ENCODE measurements at regions of chr16 and their contacts with region 1.

Region 1: DNA sequence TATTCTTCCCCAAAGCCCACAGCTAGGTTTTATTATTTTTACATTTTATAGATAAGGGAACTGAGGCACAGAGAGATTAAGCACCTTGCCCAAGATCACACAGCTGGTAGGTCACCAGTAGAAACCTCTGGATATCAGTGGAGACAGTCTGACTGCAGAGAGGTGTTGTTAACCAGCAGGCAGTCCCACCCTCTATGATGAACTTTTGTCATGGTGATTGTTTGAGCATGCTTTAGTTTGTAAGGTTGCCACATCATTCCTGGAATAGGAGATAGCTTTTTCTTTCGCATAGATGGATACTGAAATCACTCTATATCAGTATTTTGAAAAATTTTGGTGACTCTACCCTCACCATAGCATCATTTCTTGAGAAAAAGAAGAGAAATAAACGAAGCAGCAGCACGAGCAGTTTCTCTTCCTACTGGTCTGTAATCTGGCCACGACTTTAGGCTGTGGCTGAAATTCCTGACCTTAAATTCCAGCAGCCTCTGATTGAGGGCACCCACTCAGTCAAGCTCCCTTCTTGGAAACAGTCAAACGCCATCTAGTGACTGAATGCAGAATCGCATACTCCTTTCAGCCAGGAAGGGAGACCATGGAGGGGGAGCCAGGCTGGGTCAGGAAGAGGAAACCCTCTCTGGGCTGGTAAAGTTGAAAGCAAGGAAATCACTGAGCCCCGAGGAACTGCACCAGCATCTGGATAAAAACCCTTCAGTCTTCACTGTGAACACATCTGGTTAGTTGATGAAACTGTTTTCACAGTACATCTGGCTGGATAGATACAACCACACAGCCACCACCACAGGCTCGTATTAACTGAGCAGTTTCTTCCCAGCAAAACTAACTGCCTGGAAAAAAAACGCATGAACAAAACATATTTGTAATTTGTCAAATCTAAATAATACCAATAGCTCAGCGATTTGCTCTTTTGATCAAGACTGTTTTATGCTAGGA is 108.4 kb upstream of the XYLT1 start:
- DNase-seq: peak; percentile 51
- CTCF ChIP-seq: peak; percentile 91

Region 2: GRCh38 chr16:17377360-17378324 is 201.6 kb before region 1 on chr16:
- CTCF ChIA-PET with region 1: no interaction called
- POLR2A ChIA-PET with region 1: no interaction called
- DNase-seq: peak; percentile 66
- CTCF ChIP-seq: no peak

Region 3: DNA sequence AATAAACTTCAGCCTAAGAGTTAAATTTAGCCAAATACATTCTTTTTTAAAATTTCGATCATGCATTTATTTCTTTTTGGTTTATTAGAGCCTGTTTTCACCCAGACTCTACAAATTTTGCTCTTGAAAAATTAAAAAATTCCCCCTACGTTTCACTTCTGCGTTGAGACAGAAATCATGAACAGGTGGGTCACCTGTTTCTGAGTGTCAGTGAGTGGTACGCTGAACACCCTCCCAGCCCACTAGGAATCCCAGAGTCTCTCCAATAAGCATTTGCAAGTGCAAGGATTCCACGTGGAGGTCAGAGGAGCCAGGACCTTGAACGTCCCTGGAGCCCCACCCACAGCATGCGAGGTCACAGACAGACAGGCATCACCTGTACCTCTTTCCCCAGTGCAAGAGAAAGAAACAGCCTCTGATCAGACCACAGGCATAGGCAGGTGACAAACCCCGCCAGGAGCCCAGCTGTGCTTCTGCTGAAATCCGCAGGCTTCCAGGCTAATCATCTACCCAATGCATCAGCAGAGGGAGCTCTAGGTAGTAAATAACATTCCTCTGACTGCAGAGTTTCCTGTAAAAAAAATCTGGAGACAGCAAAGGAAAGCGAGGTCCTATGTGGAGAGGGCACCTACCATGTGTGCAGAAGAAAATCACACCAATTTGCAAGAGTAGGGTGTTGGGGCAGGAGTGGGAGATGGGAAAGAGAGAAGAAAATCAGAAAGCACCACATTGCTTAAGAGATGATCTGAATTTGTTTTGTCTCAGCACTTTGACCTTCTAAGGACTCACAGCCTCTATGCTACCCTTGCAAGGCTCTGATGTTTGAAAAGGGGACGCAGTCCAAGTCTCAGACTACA is 102.6 kb before region 1 on chr16:
- CTCF ChIA-PET with region 1: interaction called, 13 read pairs
- POLR2A ChIA-PET with region 1: no interaction called
- DNase-seq: peak; percentile 67
- CTCF ChIP-seq: peak; percentile 54

Region 4: GRCh38 chr16:17529982-17530765 is 49.0 kb before region 1 on chr16:
- CTCF ChIA-PET with region 1: interaction called, 20 read pairs
- POLR2A ChIA-PET with region 1: no interaction called
- DNase-seq: peak; percentile 59
- CTCF ChIP-seq: no peak

Region 5: GRCh38 chr16:17544785-17545184 is 34.4 kb before region 1 on chr16:
- CTCF ChIA-PET with region 1: interaction called, 17 read pairs
- POLR2A ChIA-PET with region 1: no interaction called
- DNase-seq: no peak
- CTCF ChIP-seq: peak; percentile 24

Region 6: DNA sequence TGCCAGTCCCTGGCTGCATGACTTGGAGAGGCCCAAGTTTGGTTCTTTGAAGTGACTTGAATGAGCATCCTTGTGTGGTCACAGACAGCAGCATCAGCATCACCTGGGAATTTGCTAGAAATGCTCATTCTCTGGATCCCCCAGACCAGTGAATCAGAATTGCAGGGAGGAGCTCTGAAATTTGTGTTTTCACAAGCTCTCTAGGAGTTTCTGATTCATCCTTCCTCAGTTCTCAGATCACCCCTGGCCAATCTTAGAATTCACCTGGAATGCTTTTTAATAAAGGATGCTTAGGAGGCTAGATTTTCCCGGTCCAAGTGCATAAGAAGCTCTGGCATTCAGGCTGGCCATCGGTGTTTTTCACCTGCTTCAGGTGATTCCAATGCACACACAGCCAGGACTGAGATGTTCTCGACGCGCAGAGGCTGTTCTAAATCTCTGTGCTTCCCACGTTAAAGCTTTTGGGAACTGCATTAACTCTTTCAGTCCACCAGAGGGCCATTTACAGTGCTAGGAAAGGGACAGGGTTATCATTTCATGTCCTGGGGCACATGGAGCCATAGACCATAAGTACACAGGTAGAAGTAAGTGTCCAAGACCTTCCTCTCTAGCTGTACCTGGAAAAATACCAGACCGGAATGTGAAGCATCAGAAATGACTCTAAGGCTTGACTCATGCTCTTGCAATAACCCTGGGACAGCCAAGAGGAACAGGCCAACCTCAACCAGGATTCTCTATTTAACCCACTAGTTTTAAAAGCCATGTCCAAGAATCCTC is 22.7 kb before region 1 on chr16:
- CTCF ChIA-PET with region 1: interaction called, 59 read pairs
- POLR2A ChIA-PET with region 1: no interaction called
- DNase-seq: peak; percentile 39
- CTCF ChIP-seq: peak; percentile 50

Region 7: GRCh38 chr16:17589898-17590297 is 10.7 kb after region 1 on chr16:
- CTCF ChIA-PET with region 1: interaction called, 22 read pairs
- POLR2A ChIA-PET with region 1: no interaction called
- DNase-seq: no peak
- CTCF ChIP-seq: no peak